ENCODE measurements at regions of chr6 and their contacts with region 1.

Region 1: GRCh38 chr6:33846226-33846625 is 42.4 kb upstream of the MLN start:
- DNase-seq: peak; percentile 78
- H3K4me3 ChIP-seq: no peak overlapping the region
- H3K27ac ChIP-seq: no peak overlapping the region
- H3K4me1 ChIP-seq: peaks cover 16% of the 10 kb centered on the region
- H3K27me3 ChIP-seq: no peaks in the 10 kb centered on the region
- CTCF ChIP-seq: no peak

Region 2: DNA sequence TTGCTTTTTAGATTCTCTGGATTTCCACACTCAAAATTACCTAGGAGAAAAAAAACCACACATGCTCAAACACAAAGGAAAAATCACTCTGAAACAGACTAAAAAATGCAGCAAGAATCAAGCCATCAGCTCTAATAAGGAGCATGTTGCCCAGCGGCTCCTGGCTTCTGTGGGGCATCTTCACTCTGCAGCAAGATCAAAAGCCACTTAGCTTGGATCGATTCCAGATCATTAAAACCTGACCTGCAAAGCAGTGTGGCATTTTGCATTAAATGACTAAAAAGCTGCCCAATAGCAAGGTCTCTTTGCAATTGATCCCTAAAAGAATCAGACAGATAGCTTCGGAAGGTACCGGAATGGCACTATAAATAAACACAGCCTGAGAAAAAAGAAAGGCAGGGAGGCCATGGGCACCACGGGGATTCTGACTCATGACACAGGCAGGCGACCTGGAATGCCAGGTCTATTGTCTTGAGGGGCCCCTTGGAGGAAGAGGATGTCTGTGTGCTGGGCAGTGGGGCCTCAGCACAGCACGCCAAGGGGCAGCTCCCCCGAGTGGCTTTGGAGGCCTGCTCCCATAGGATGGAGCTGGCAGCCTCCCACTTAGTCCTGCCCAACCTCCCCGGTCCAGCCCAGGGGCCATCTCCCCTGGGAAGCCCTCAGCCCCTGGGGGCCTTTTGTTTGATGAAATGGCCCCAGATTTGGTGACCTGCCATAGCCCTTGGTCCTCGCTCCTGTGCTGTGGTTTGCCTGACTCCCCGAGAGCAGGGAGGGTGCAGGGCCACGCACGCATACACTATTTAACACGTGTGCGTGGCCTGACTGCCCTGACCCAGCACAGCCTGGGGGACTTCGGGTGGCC is 64.9 kb before region 1 on chr6:
- CTCF ChIA-PET with region 1: no interaction called
- dilution Hi-C with region 1: no loop called
- in situ Hi-C with region 1: no loop called
- intact Hi-C with region 1: no loop called
- DNase-seq: peak; percentile 25
- H3K4me3 ChIP-seq: no peak overlapping the region
- H3K27ac ChIP-seq: no peak overlapping the region
- H3K4me1 ChIP-seq: peaks cover 17% of the 10 kb centered on the region
- H3K27me3 ChIP-seq: no peaks in the 10 kb centered on the region
- CTCF ChIP-seq: no peak

Region 3: GRCh38 chr6:33809594-33809993 is 36.6 kb before region 1 on chr6:
- CTCF ChIA-PET with region 1: no interaction called
- dilution Hi-C with region 1: no loop called
- in situ Hi-C with region 1: no loop called
- intact Hi-C with region 1: no loop called
- DNase-seq: no peak
- H3K4me3 ChIP-seq: no peak overlapping the region
- H3K27ac ChIP-seq: no peak overlapping the region
- H3K4me1 ChIP-seq: no peaks in the 10 kb centered on the region
- H3K27me3 ChIP-seq: peaks cover 4% of the 10 kb centered on the region
- CTCF ChIP-seq: no peak

Region 4: GRCh38 chr6:33896391-33897183 is 50.4 kb after region 1 on chr6:
- CTCF ChIA-PET with region 1: no interaction called
- dilution Hi-C with region 1: loop called (anchors 5 kb)
- in situ Hi-C with region 1: no loop called
- intact Hi-C with region 1: no loop called
- DNase-seq: no peak
- H3K4me3 ChIP-seq: no peak overlapping the region
- H3K27ac ChIP-seq: no peak overlapping the region
- H3K4me1 ChIP-seq: no peaks in the 10 kb centered on the region
- H3K27me3 ChIP-seq: no peaks in the 10 kb centered on the region
- CTCF ChIP-seq: no peak

Measured in mammary epithelial cell (primary cell).